MCF 10A (cell line): ENCODE measurements at regions of chr12 and their contacts with region 1.

Region 1: DNA sequence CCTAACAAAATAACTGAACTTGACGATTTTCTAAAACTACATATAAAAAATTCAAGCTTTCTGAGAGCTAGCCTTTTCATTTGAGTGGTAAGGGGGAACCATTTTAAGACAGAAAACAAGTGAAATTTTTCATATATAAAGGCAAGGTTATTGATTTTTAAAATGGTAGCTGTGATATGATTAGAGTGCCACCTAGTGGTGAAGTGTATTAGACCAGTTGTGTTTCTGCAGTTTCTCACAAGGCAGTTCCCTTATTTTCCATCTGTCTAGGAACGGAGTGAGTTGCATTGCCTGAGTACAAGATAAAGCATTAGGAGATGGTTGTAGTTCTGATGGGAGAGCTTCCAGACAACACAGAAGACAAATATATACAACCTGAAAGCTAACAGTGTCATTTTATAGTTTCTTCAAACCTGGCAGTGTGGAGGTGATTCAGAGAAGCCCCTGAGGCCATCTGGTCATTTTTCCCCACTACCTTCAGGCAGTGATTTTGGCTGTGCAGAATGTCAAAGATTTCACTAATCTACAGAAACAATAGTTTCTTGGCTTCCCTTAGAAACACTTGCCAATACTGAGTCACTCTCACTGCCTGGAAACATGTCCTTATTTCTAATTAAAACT is 180.8 kb downstream of the C12orf50 start:
- DNase-seq: peak; percentile 70
- H3K4me3 Mint-ChIP-seq: no peak overlapping the region
- H3K27ac Mint-ChIP-seq: peak overlapping the region; percentile 8
- H3K4me1 Mint-ChIP-seq: peaks cover 12% of the 10 kb centered on the region
- H3K27me3 Mint-ChIP-seq: no peaks in the 10 kb centered on the region
- CTCF ChIP-seq: peak; percentile 75

Region 2: GRCh38 chr12:85951823-85952222 is 1896.5 kb before region 1 on chr12:
- CTCF ChIA-PET with region 1: interaction called, 7 read pairs
- POLR2A ChIA-PET with region 1: no interaction called
- intact Hi-C with region 1: loop called (anchors 1 kb)
- DNase-seq: peak; percentile 24
- H3K4me3 Mint-ChIP-seq: no peak overlapping the region
- H3K27ac Mint-ChIP-seq: no peak overlapping the region
- H3K4me1 Mint-ChIP-seq: no peaks in the 10 kb centered on the region
- H3K27me3 Mint-ChIP-seq: no peaks in the 10 kb centered on the region
- CTCF ChIP-seq: peak; percentile 55

Region 3: GRCh38 chr12:86914716-86915115 is 933.6 kb before region 1 on chr12:
- CTCF ChIA-PET with region 1: interaction called, 4 read pairs
- POLR2A ChIA-PET with region 1: interaction called, 3 read pairs
- intact Hi-C with region 1: loop called (anchors 5 kb)
- DNase-seq: peak; percentile 70
- H3K4me3 Mint-ChIP-seq: no peak overlapping the region
- H3K27ac Mint-ChIP-seq: peak overlapping the region; percentile 25
- H3K4me1 Mint-ChIP-seq: peaks cover 6% of the 10 kb centered on the region
- H3K27me3 Mint-ChIP-seq: no peaks in the 10 kb centered on the region
- CTCF ChIP-seq: peak; percentile 55

Region 4: GRCh38 chr12:87344699-87345098 is 503.7 kb before region 1 on chr12:
- CTCF ChIA-PET with region 1: interaction called, 10 read pairs
- POLR2A ChIA-PET with region 1: no interaction called
- intact Hi-C with region 1: loop called (anchors 5 kb)
- DNase-seq: peak; percentile 2
- H3K4me3 Mint-ChIP-seq: no peak overlapping the region
- H3K27ac Mint-ChIP-seq: no peak overlapping the region
- H3K4me1 Mint-ChIP-seq: peaks cover 6% of the 10 kb centered on the region
- H3K27me3 Mint-ChIP-seq: no peaks in the 10 kb centered on the region
- CTCF ChIP-seq: no peak

Region 5: GRCh38 chr12:87793131-87793530 is 55.2 kb before region 1 on chr12:
- CTCF ChIA-PET with region 1: no interaction called
- POLR2A ChIA-PET with region 1: no interaction called
- intact Hi-C with region 1: no loop called
- DNase-seq: no peak
- H3K4me3 Mint-ChIP-seq: no peak overlapping the region
- H3K27ac Mint-ChIP-seq: no peak overlapping the region
- H3K4me1 Mint-ChIP-seq: peaks cover 19% of the 10 kb centered on the region
- H3K27me3 Mint-ChIP-seq: no peaks in the 10 kb centered on the region
- CTCF ChIP-seq: no peak

Region 6: DNA sequence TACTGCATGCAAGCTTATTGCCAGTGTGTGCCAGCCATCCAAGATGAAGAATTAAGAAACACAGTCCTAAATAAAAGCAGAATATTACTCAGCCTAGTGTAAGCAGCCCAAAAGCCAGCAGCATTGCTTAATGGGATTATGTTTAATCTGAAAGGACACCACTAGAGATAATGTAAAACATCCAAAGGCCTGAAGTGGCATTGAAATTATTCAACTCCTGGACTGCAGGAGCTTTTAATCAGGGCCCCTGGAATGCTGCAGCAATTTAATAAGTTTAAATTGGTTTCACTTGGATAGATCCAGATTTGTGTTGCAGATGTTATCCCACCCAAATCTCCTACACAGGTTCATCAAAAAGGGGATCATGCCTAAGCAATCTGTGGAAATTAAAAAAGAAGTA is 12.2 kb before region 1 on chr12:
- CTCF ChIA-PET with region 1: interaction called, 12 read pairs
- POLR2A ChIA-PET with region 1: no interaction called
- intact Hi-C with region 1: no loop called
- DNase-seq: no peak
- H3K4me3 Mint-ChIP-seq: no peak overlapping the region
- H3K27ac Mint-ChIP-seq: no peak overlapping the region
- H3K4me1 Mint-ChIP-seq: no peaks in the 10 kb centered on the region
- H3K27me3 Mint-ChIP-seq: no peaks in the 10 kb centered on the region
- CTCF ChIP-seq: no peak

Region 7: DNA sequence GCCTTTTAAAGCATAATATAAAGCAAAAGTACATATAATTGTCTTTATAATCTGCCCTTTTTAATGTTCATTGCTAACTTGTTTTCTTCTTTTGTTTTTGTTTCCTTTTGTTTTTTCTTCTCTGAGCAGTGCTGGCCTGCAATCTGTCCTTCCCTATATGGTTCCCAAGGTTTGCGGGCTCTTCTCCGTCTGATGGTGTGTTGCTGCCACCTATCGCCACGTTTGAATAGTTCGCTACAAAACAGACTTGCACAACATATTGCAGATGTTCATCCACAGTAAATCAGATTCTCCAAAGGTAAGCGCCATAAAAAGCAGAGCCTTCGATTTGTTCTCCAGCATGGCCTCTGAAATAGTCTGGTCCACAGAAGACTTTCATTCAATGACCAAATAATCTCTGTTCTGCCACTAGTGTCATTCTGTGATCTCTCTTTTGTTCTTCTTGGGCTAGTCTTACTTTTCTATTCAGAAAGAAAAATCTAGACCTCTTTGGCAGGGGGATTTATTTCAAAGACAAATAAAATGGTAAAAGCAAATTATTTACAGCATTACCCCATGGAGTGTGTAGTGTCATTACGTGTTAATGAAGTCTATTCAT is 147.3 kb after region 1 on chr12:
- CTCF ChIA-PET with region 1: interaction called, 5 read pairs
- POLR2A ChIA-PET with region 1: no interaction called
- intact Hi-C with region 1: loop called (anchors 5 kb)
- DNase-seq: peak; percentile 82
- H3K4me3 Mint-ChIP-seq: no peak overlapping the region
- H3K27ac Mint-ChIP-seq: no peak overlapping the region
- H3K4me1 Mint-ChIP-seq: peaks cover 8% of the 10 kb centered on the region
- H3K27me3 Mint-ChIP-seq: no peaks in the 10 kb centered on the region
- CTCF ChIP-seq: peak; percentile 78